Activated T-helper 2 cell treated with anti-CD3 and anti-CD28 coated beads, Interferon-gamma antibody, Interleukin-2, Interleukin-4, amounts not matched to agents 10 μg/mL and 5 μg/mL and 100 μg/mL, durations not matched to agents 14 hours and 24 hours and 36 hours (primary cell): ENCODE measurements at regions of chrX and their contacts with region 1.

Region 1: GRCh38 chrX:19532709-19533108 is 17.4 kb upstream of the MAP3K15 start:
- DNase-seq: no peak
- H3K4me3 Mint-ChIP-seq: no peak overlapping the region
- H3K27ac Mint-ChIP-seq: no peak overlapping the region
- H3K4me1 Mint-ChIP-seq: no peaks in the 10 kb centered on the region
- H3K27me3 Mint-ChIP-seq: no peaks in the 10 kb centered on the region

Region 2: GRCh38 chrX:19372170-19372546 is 160.6 kb before region 1 on chrX:
- intact Hi-C with region 1: loop called (anchors 5 kb)
- DNase-seq: peak; percentile 41
- H3K4me3 Mint-ChIP-seq: peak overlapping the region; percentile 62
- H3K27ac Mint-ChIP-seq: no peak overlapping the region
- H3K4me1 Mint-ChIP-seq: peaks cover 5% of the 10 kb centered on the region
- H3K27me3 Mint-ChIP-seq: no peaks in the 10 kb centered on the region

Region 3: GRCh38 chrX:19649226-19649995 is 116.7 kb after region 1 on chrX:
- intact Hi-C with region 1: no loop called
- DNase-seq: no peak
- H3K4me3 Mint-ChIP-seq: no peak overlapping the region
- H3K27ac Mint-ChIP-seq: no peak overlapping the region
- H3K4me1 Mint-ChIP-seq: peaks cover 31% of the 10 kb centered on the region
- H3K27me3 Mint-ChIP-seq: no peaks in the 10 kb centered on the region